ENCODE measurements at regions of chr2 and their contacts with region 1.

Region 1: GRCh38 chr2:230326453-230327417 is at the start of gene SP140L:
- DNase-seq: peak; percentile 63 to 91 (median 77)
- ATAC-seq: peak; percentile 99
- H3K4me3 ChIP-seq: peak within 1 kb of the TSS; percentile 70
- H3K4me3 Mint-ChIP-seq: peak within 1 kb of the TSS; percentile 90
- H3K27ac ChIP-seq: peak within 1 kb of the TSS; percentile 89 to 92
- H3K27ac Mint-ChIP-seq: peak within 1 kb of the TSS; percentile 98
- H3K4me1 ChIP-seq: peaks cover 45% of the 10 kb centered on the region
- H3K4me1 Mint-ChIP-seq: peaks cover 85% of the 10 kb centered on the region
- H3K27me3 ChIP-seq: no peaks in the 10 kb centered on the region
- H3K27me3 Mint-ChIP-seq: no peaks in the 10 kb centered on the region
- CTCF ChIP-seq: no peak
- total RNA-seq, gene SP140L: 55.3 to 64.1 TPM

Region 2: DNA sequence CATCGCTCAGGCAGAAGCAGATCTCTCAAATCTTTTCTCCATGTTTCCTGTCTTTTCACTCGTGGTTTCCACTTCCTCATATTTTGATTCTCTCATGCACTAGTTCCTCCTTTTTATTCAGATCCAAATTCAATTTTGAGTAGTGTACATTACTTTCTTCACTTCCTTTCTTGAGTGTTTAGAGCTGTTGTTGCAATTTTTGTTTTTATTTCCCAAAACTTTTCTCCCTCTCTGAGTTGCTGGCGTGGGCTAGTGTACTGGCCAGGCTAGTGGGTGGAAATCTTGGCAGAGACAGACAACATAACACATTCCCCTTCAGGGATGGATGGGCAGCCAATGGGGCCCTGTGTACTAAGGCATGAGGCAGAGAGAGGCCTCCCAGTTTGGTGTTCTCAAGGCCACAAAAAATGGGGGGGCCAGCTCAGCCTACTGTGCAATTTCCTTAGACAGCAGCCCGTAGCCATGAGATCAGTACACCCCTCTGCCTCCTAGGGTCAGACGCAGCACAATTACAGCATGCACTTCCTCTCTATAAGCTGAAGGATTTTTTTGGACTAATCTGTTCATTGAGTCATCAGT is 910.5 kb before region 1 on chr2:
- CTCF ChIA-PET with region 1: no interaction called
- POLR2A ChIA-PET with region 1: no interaction called
- intact Hi-C with region 1: no loop called
- DNase-seq: peak in 3 of 14 experiments; percentile 18 to 66 (median 54)
- ATAC-seq: no peak
- H3K4me3 ChIP-seq: no peak overlapping the region
- H3K4me3 Mint-ChIP-seq: no peak overlapping the region
- H3K27ac ChIP-seq: no peak overlapping the region
- H3K27ac Mint-ChIP-seq: no peak overlapping the region
- H3K4me1 ChIP-seq: no peaks in the 10 kb centered on the region
- H3K4me1 Mint-ChIP-seq: no peaks in the 10 kb centered on the region
- H3K27me3 ChIP-seq: no peaks in the 10 kb centered on the region
- H3K27me3 Mint-ChIP-seq: peaks cover 21% of the 10 kb centered on the region
- CTCF ChIP-seq: no peak

Region 3: GRCh38 chr2:230254152-230254881 is 72.4 kb before region 1 on chr2:
- CTCF ChIA-PET with region 1: no interaction called
- POLR2A ChIA-PET with region 1: interaction called, 13 read pairs
- intact Hi-C with region 1: no loop called
- DNase-seq: peak in 7 of 14 experiments; percentile 12 to 72 (median 40)
- ATAC-seq: peak; percentile 84
- H3K4me3 ChIP-seq: peak overlapping the region; percentile 22
- H3K4me3 Mint-ChIP-seq: no peak overlapping the region
- H3K27ac ChIP-seq: no peak overlapping the region
- H3K27ac Mint-ChIP-seq: no peak overlapping the region
- H3K4me1 ChIP-seq: peaks cover 29% of the 10 kb centered on the region
- H3K4me1 Mint-ChIP-seq: no peaks in the 10 kb centered on the region
- H3K27me3 ChIP-seq: no peaks in the 10 kb centered on the region
- H3K27me3 Mint-ChIP-seq: no peaks in the 10 kb centered on the region
- CTCF ChIP-seq: no peak

Region 4: GRCh38 chr2:230262246-230262645 is 64.5 kb before region 1 on chr2:
- CTCF ChIA-PET with region 1: no interaction called
- POLR2A ChIA-PET with region 1: interaction called, 10 read pairs
- intact Hi-C with region 1: no loop called
- DNase-seq: peak in 3 of 14 experiments; percentile 42 to 73 (median 50)
- ATAC-seq: peak; percentile 94
- H3K4me3 ChIP-seq: peak overlapping the region; percentile 19
- H3K4me3 Mint-ChIP-seq: peak overlapping the region; percentile 40
- H3K27ac ChIP-seq: peak overlapping the region in 1 of 2 donors; percentile 48
- H3K27ac Mint-ChIP-seq: peak overlapping the region; percentile 76
- H3K4me1 ChIP-seq: peaks cover 3% of the 10 kb centered on the region
- H3K4me1 Mint-ChIP-seq: peaks cover 49% of the 10 kb centered on the region
- H3K27me3 ChIP-seq: no peaks in the 10 kb centered on the region
- H3K27me3 Mint-ChIP-seq: no peaks in the 10 kb centered on the region
- CTCF ChIP-seq: no peak

Region 5: DNA sequence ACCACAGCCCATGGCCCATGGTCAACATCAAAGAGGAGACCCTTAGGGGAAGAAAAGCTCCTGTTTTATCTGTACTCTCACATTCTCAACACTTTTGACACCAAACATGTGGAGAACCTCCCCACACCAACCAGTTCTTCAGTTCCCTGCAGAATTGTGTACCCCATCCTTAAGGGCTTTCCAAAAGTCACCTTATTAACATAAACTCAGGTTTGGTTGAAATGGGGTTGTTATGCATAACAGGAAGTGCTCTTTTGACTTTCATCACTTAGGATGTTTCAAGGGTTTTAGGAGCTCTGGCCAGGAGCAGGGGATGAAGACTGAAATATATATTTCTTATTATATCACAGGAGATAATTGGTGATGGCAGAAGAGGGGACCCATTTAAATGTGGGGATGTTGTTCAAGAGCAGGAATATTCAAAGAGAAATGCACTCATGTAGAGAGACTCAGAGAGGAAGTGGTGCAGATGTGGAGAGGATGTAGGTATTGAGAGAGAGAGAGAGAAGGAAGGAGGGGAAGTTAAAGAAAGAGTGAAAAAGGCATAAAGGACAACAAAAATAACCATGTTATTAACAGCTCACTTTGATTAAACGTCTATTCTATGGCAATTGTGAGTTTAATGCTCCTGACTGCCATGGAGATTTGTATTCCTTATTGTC is 35.4 kb after region 1 on chr2:
- CTCF ChIA-PET with region 1: no interaction called
- POLR2A ChIA-PET with region 1: interaction called, 9 read pairs
- intact Hi-C with region 1: loop called in 1 of 2 experiments (anchors 5 kb)
- DNase-seq: peak in 1 of 14 experiments; percentile 21
- ATAC-seq: no peak
- H3K4me3 ChIP-seq: no peak overlapping the region
- H3K4me3 Mint-ChIP-seq: peak overlapping the region; percentile 18
- H3K27ac ChIP-seq: peak overlapping the region; percentile 22 to 32
- H3K27ac Mint-ChIP-seq: peak overlapping the region; percentile 78
- H3K4me1 ChIP-seq: peaks cover 15% of the 10 kb centered on the region
- H3K4me1 Mint-ChIP-seq: peaks cover 60% of the 10 kb centered on the region
- H3K27me3 ChIP-seq: no peaks in the 10 kb centered on the region
- H3K27me3 Mint-ChIP-seq: no peaks in the 10 kb centered on the region
- CTCF ChIP-seq: no peak

Region 6: DNA sequence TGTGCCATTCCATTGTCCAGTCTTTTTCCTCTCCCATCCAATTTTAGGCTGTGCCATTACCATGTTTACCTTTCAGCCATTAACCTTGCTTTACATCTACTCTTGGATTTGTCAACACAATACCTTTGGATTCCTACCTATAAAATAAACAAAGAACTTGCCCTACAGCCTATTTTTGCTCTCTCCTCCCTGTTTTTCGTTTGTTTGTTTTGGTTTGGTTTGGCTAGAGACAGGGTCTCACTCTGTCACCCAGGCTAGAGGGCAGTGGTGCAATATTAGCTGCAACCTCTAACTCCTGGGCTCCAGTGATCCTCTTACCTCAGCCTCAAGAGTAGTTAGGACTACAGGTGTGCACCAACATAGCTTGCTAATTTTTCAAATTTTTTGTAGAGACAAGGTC is 165.4 kb after region 1 on chr2:
- CTCF ChIA-PET with region 1: no interaction called
- POLR2A ChIA-PET with region 1: no interaction called
- intact Hi-C with region 1: no loop called
- DNase-seq: no peak
- ATAC-seq: no peak
- H3K4me3 ChIP-seq: no peak overlapping the region
- H3K4me3 Mint-ChIP-seq: no peak overlapping the region
- H3K27ac ChIP-seq: no peak overlapping the region
- H3K27ac Mint-ChIP-seq: no peak overlapping the region
- H3K4me1 ChIP-seq: peaks cover 8% of the 10 kb centered on the region
- H3K4me1 Mint-ChIP-seq: peaks cover 36% of the 10 kb centered on the region
- H3K27me3 ChIP-seq: no peaks in the 10 kb centered on the region
- H3K27me3 Mint-ChIP-seq: no peaks in the 10 kb centered on the region
- CTCF ChIP-seq: no peak

Region 7: GRCh38 chr2:230512955-230513748 is 186.4 kb after region 1 on chr2:
- CTCF ChIA-PET with region 1: no interaction called
- POLR2A ChIA-PET with region 1: no interaction called
- intact Hi-C with region 1: no loop called
- DNase-seq: no peak
- ATAC-seq: no peak
- H3K4me3 ChIP-seq: no peak overlapping the region
- H3K4me3 Mint-ChIP-seq: no peak overlapping the region
- H3K27ac ChIP-seq: no peak overlapping the region
- H3K27ac Mint-ChIP-seq: no peak overlapping the region
- H3K4me1 ChIP-seq: no peaks in the 10 kb centered on the region
- H3K4me1 Mint-ChIP-seq: no peaks in the 10 kb centered on the region
- H3K27me3 ChIP-seq: no peaks in the 10 kb centered on the region
- H3K27me3 Mint-ChIP-seq: no peaks in the 10 kb centered on the region
- CTCF ChIP-seq: no peak

Region 8: GRCh38 chr2:231099918-231100317 is 773.2 kb after region 1 on chr2:
- CTCF ChIA-PET with region 1: no interaction called
- POLR2A ChIA-PET with region 1: no interaction called
- intact Hi-C with region 1: no loop called
- DNase-seq: peak in 1 of 14 experiments; percentile 11
- ATAC-seq: no peak
- H3K4me3 ChIP-seq: no peak overlapping the region
- H3K4me3 Mint-ChIP-seq: no peak overlapping the region
- H3K27ac ChIP-seq: no peak overlapping the region
- H3K27ac Mint-ChIP-seq: no peak overlapping the region
- H3K4me1 ChIP-seq: no peaks in the 10 kb centered on the region
- H3K4me1 Mint-ChIP-seq: peaks cover 5% of the 10 kb centered on the region
- H3K27me3 ChIP-seq: no peaks in the 10 kb centered on the region
- H3K27me3 Mint-ChIP-seq: no peaks in the 10 kb centered on the region
- CTCF ChIP-seq: no peak